Caco-2 (cell line): ENCODE measurements at regions of chr11 and their contacts with region 1.

Region 1: DNA sequence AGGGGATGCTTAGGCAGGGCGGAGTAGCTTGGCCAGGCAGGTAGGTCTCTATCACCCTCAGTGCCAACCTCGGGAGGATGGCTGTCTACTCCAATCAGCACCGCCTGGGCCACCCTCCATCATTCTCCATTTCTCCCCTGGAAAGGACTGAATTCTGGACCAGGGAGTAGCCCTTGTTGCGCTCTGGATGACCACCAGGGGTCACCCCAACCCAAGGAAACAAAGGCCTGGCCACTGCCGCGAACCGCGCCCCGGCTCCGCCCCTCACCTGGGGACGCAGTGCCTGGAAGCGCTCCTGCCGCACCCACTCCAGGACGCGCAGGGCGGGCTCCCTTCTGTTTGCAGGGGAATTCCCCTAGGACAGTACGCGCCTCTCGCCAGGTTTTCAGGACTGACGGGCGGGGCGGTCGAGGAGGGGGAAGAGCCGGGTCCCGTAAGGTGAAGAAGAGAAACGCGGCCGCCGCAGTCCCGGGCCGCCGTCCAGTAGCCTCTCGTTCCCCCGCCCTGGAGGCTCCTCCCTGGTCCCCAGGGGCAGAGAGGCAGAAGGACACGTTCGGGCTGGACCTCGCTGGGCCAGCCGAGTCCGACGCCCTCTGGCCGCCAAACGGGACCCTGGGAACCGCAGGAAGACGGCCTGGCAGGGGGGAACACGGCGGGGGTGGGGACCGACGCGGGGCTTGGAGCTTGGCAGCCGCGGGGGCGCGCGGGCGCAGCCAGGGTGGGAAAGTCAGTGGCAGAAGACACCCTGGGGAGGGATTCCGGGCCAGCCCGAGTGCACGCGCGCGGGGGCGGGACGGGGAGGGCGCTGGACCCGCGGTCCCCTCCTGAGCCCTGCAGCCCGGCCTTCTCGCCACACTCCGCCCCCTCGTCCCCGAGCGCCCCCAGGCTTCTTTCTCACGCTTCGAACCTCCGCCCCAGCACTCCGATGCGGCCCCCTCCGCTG is 7.1 kb downstream of the SCN4B start:
- DNase-seq: peak; percentile 96 to 99
- H3K4me3 ChIP-seq: peak overlapping the region; percentile 84
- H3K4me3 Mint-ChIP-seq: peak overlapping the region; percentile 81
- H3K27ac Mint-ChIP-seq: no peak overlapping the region
- H3K4me1 ChIP-seq: peaks cover 7% of the 10 kb centered on the region
- H3K4me1 Mint-ChIP-seq: peaks cover 17% of the 10 kb centered on the region
- H3K27me3 ChIP-seq: peaks cover 2% of the 10 kb centered on the region
- H3K27me3 Mint-ChIP-seq: peaks cover 13% of the 10 kb centered on the region
- CTCF ChIP-seq: peak; percentile 98 to 99

Region 2: DNA sequence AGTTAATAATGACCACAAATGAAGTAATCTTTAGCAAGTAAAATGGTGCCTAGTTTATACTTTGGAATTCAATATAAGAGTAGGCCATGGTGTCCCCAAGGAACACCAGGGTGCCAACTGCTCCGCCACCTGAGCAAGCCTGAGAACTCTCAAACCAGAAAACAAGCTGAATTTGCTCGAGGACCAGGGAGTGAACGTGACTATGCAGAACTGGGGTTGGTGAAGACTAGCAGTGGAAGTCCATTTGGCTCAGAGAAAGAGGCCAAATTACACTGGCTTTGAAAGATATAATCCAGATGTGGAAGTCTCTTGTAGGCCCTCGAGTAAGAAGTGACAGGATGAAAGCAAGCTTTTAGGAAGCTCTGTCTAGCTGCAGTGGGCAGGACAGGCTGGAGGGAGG is 50.1 kb before region 1 on chr11:
- CTCF ChIA-PET with region 1: no interaction called
- POLR2A ChIA-PET with region 1: no interaction called
- intact Hi-C with region 1: loop called (anchors 1 kb)
- DNase-seq: no peak
- H3K4me3 ChIP-seq: no peak overlapping the region
- H3K4me3 Mint-ChIP-seq: peak overlapping the region; percentile 16
- H3K27ac Mint-ChIP-seq: peak overlapping the region; percentile 7
- H3K4me1 ChIP-seq: peaks cover 67% of the 10 kb centered on the region
- H3K4me1 Mint-ChIP-seq: peaks cover 55% of the 10 kb centered on the region
- H3K27me3 ChIP-seq: no peaks in the 10 kb centered on the region
- H3K27me3 Mint-ChIP-seq: no peaks in the 10 kb centered on the region
- CTCF ChIP-seq: no peak

Region 3: GRCh38 chr11:118164885-118165284 is 19.3 kb after region 1 on chr11:
- CTCF ChIA-PET with region 1: no interaction called
- POLR2A ChIA-PET with region 1: no interaction called
- intact Hi-C with region 1: no loop called
- DNase-seq: no peak
- H3K4me3 ChIP-seq: no peak overlapping the region
- H3K4me3 Mint-ChIP-seq: no peak overlapping the region
- H3K27ac Mint-ChIP-seq: no peak overlapping the region
- H3K4me1 ChIP-seq: 0 out of 2 replicates have a peak, but pooled peaks cover 3% of the 10 kb centered on the region
- H3K4me1 Mint-ChIP-seq: peaks cover 16% of the 10 kb centered on the region
- H3K27me3 ChIP-seq: no peaks in the 10 kb centered on the region; the same call in 1 of the 2 replicates
- H3K27me3 Mint-ChIP-seq: no peaks in the 10 kb centered on the region
- CTCF ChIP-seq: no peak

Region 4: GRCh38 chr11:118290923-118291322 is 145.4 kb after region 1 on chr11:
- CTCF ChIA-PET with region 1: interaction called, 3 read pairs
- POLR2A ChIA-PET with region 1: no interaction called
- intact Hi-C with region 1: loop called (anchors 1 kb)
- DNase-seq: peak; percentile 80 to 82
- H3K4me3 ChIP-seq: no peak overlapping the region
- H3K4me3 Mint-ChIP-seq: no peak overlapping the region
- H3K27ac Mint-ChIP-seq: no peak overlapping the region
- H3K4me1 ChIP-seq: peaks cover 9% of the 10 kb centered on the region
- H3K4me1 Mint-ChIP-seq: peaks cover 24% of the 10 kb centered on the region
- H3K27me3 ChIP-seq: no peaks in the 10 kb centered on the region
- H3K27me3 Mint-ChIP-seq: no peaks in the 10 kb centered on the region
- CTCF ChIP-seq: peak; percentile 61 to 70

Region 5: DNA sequence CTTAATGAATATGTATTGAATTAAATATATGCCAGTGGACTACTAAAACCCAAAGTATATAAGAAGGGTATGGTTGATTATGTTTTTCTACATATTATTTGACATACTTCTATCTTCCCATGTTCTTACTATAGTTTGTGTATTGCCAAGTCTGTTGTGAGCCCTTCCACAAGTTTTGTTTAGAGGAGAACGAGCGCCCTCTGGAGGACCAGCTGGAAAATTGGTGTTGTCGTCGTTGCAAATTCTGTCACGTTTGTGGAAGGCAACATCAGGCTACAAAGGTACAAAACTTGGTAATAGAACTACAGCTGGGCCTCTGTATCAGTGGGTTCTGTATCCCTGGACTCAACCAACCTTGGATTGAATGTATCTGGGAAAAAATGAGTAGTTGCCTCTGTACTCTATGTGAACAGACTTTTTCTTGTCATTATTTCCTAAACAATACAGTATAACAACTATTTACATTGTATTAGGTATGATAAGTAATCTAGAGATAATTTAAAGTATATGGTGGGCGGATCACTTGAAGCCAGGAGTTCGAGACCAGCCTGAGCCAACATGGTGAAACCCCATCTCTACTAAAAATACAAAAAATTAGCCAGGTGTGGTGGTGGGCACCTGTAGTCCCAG is 343.0 kb after region 1 on chr11:
- CTCF ChIA-PET with region 1: no interaction called
- POLR2A ChIA-PET with region 1: no interaction called
- intact Hi-C with region 1: loop called (anchors 1 kb)
- DNase-seq: peak; percentile 76 to 84
- H3K4me3 ChIP-seq: no peak overlapping the region
- H3K4me3 Mint-ChIP-seq: no peak overlapping the region
- H3K27ac Mint-ChIP-seq: no peak overlapping the region
- H3K4me1 ChIP-seq: no peaks in the 10 kb centered on the region
- H3K4me1 Mint-ChIP-seq: no peaks in the 10 kb centered on the region
- H3K27me3 ChIP-seq: no peaks in the 10 kb centered on the region
- H3K27me3 Mint-ChIP-seq: no peaks in the 10 kb centered on the region
- CTCF ChIP-seq: peak; percentile 97

Region 6: GRCh38 chr11:118659314-118659952 is 513.9 kb after region 1 on chr11:
- CTCF ChIA-PET with region 1: no interaction called
- POLR2A ChIA-PET with region 1: no interaction called
- intact Hi-C with region 1: loop called (anchors 10 kb)
- DNase-seq: peak; percentile 97 to 99
- H3K4me3 ChIP-seq: no peak overlapping the region
- H3K4me3 Mint-ChIP-seq: no peak overlapping the region
- H3K27ac Mint-ChIP-seq: peak overlapping the region; percentile 43
- H3K4me1 ChIP-seq: peaks cover 37% of the 10 kb centered on the region
- H3K4me1 Mint-ChIP-seq: peaks cover 11% of the 10 kb centered on the region
- H3K27me3 ChIP-seq: no peaks in the 10 kb centered on the region
- H3K27me3 Mint-ChIP-seq: no peaks in the 10 kb centered on the region
- CTCF ChIP-seq: peak; percentile 100